Activated CD4-positive, alpha-beta T cell treated with anti-CD3 and anti-CD28 coated beads, Interleukin-2, amount 10 ng/mL, durations not matched to agents 24 days and 14 days (primary cell): ENCODE measurements at regions of chr11 and their contacts with region 1.

Region 1: DNA sequence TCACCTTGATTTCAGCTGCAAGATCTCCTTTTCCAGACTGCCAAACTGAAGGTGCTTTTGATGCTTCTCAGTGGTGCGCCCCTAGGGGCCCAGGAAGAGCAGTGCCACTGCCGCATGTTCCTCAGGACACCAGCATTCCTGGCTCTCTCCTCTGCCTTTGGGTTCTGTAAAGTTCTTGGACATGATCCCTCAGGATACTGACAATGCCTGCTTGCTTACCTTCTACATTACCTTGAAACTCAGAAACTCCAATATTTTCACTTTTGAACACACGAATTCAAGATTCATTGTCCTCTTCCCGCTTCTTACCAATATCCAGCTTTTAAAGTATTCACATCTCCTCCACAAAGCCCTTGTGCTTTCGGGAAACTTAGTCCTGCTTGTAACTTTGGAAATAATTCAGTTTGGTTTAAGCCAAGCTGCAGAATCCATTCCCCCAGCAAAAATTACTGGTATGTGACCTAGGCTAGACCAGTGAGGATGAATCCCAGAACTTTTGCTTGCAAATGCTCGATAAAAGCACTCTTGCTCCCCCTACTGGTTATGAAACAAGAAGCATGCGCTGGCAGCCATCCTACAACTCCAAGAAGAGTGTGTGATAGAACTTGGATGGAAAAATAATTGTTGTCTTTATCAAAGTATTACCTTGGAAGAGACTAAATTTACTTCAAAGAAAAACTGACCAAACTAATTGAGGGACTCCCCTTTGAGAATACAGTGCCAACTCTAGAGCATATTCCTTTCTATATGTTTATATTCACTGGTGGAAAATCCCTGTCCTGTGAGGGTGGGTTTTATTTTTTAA is 16.5 kb upstream of the OR5B21 start:
- DNase-seq: peak; percentile 84
- H3K4me3 Mint-ChIP-seq: peak overlapping the region; percentile 79
- H3K27ac Mint-ChIP-seq: peak overlapping the region; percentile 91
- H3K4me1 Mint-ChIP-seq: peaks cover 22% of the 10 kb centered on the region
- H3K27me3 Mint-ChIP-seq: no peaks in the 10 kb centered on the region

Region 2: GRCh38 chr11:57426929-57427726 is 1097.3 kb before region 1 on chr11 and contains the start of gene SLC43A3:
- intact Hi-C with region 1: loop called (anchors 10 kb)
- DNase-seq: peak; percentile 91
- H3K4me3 Mint-ChIP-seq: peak within 1 kb of the TSS; percentile 96
- H3K27ac Mint-ChIP-seq: peak within 1 kb of the TSS; percentile 95
- H3K4me1 Mint-ChIP-seq: peaks cover 43% of the 10 kb centered on the region
- H3K27me3 Mint-ChIP-seq: peaks cover 9% of the 10 kb centered on the region
- total RNA-seq, gene SLC43A3: 255 and 261 TPM in 2 replicates

Region 3: GRCh38 chr11:57741132-57742086 is 783.0 kb before region 1 on chr11 and contains the start of gene SELENOH:
- intact Hi-C with region 1: loop called (anchors 1 kb)
- DNase-seq: peak; percentile 98
- H3K4me3 Mint-ChIP-seq: peak within 1 kb of the TSS; percentile 93
- H3K27ac Mint-ChIP-seq: peak within 1 kb of the TSS; percentile 96
- H3K4me1 Mint-ChIP-seq: peaks cover 30% of the 10 kb centered on the region
- H3K27me3 Mint-ChIP-seq: no peaks in the 10 kb centered on the region
- total RNA-seq, gene SELENOH: 211 and 216 TPM in 2 replicates

Region 4: GRCh38 chr11:57800444-57801182 is 723.8 kb before region 1 on chr11:
- intact Hi-C with region 1: loop called (anchors 2 kb)
- DNase-seq: peak; percentile 80
- H3K4me3 Mint-ChIP-seq: peak overlapping the region; percentile 32
- H3K27ac Mint-ChIP-seq: peak overlapping the region; percentile 23
- H3K4me1 Mint-ChIP-seq: peaks cover 28% of the 10 kb centered on the region
- H3K27me3 Mint-ChIP-seq: no peaks in the 10 kb centered on the region

Region 5: GRCh38 chr11:58573451-58574104 is 49.1 kb after region 1 on chr11:
- intact Hi-C with region 1: loop called (anchors 1 kb)
- DNase-seq: peak; percentile 77
- H3K4me3 Mint-ChIP-seq: peak overlapping the region; percentile 93
- H3K27ac Mint-ChIP-seq: peak overlapping the region; percentile 95
- H3K4me1 Mint-ChIP-seq: peaks cover 66% of the 10 kb centered on the region
- H3K27me3 Mint-ChIP-seq: peaks cover 4% of the 10 kb centered on the region